HEK293 (cell line): ENCODE measurements at regions of chr18 and their contacts with region 1.

Region 1: GRCh38 chr18:46281185-46282176 is 177.3 kb downstream of the HAUS1 start:
- H3K4me3 ChIP-seq: no peak overlapping the region
- H3K27ac ChIP-seq: no peak overlapping the region
- H3K4me1 ChIP-seq: no peaks in the 10 kb centered on the region; the same call in 1 of the 2 replicates
- CTCF ChIP-seq: peak; percentile 44; the same call in 1 of the 2 replicates

Region 2: DNA sequence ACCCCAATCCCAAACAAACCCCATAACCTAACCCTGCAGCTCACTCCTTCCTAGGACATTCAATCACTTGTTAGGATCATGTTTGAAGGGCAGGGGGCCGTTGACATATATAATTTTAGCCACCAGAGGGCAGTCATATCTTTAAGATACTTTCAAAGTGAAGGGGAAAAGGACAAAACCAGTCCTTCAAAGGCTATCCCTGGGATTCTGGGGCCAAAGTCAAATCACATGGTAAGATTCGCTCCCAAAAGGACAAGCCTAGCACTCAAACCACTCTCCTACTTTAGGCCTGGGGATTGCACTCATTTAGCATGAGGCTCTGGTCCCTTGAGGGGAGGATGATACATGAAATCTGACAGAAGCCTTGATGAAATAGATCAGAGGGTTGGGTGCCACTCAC is 132.7 kb before region 1 on chr18:
- CTCF ChIA-PET with region 1: interaction called, 58 read pairs
- POLR2A ChIA-PET with region 1: interaction called, 4 read pairs
- H3K4me3 ChIP-seq: no peak overlapping the region
- H3K27ac ChIP-seq: no peak overlapping the region
- H3K4me1 ChIP-seq: peaks cover 8% of the 10 kb centered on the region
- CTCF ChIP-seq: 0 out of 2 replicates have a peak, but pooled peaks have one; percentile 45

Region 3: GRCh38 chr18:46297621-46298020 is 16.1 kb after region 1 on chr18:
- CTCF ChIA-PET with region 1: interaction called, 28 read pairs
- POLR2A ChIA-PET with region 1: interaction called, 4 read pairs
- H3K4me3 ChIP-seq: no peak overlapping the region
- H3K27ac ChIP-seq: no peak overlapping the region
- H3K4me1 ChIP-seq: no peaks in the 10 kb centered on the region
- CTCF ChIP-seq: no peak

Region 4: DNA sequence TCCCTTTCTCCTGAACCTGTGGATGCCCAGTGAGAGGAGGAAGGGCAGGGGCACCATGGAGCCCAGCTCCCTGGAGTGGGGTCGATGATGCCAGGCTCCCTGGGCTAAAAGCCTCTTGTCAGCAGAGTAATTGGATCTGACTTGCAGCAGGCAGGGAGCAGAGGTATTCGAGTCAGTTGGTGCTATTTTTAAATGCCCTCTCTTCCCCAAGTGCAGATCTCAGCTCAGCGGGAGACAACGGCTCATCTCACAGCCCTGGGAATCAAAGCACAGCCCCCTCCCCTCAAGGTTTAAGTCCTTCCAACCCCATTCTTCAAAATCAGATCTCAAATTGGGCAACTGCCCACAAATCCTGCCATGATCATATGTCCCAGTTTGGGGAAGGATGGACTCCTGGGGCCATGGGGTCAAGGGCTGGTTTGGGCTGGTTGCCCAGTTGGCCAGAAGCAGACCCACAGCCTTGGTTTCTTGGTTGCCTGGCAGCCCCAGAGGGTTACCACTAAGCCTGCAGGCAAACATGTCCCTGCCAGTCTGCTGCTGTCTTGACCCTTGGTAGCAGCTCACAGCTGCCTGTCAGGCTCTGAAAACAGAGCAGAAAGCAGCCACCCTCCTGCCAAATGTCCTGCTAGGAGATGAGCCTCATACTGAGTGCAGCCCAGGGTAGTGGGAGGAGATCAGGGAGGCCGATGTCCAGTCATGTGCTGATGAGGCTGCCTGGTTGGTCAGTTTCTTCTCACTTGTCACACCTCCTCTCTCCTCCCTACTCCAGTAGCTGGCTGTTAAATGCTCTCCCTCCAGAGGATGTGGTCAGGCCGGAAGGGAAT is 130.6 kb after region 1 on chr18:
- CTCF ChIA-PET with region 1: interaction called, 18 read pairs
- POLR2A ChIA-PET with region 1: no interaction called
- H3K4me3 ChIP-seq: no peak overlapping the region
- H3K27ac ChIP-seq: no peak overlapping the region
- H3K4me1 ChIP-seq: peaks cover 15% of the 10 kb centered on the region
- CTCF ChIP-seq: no peak

Region 5: DNA sequence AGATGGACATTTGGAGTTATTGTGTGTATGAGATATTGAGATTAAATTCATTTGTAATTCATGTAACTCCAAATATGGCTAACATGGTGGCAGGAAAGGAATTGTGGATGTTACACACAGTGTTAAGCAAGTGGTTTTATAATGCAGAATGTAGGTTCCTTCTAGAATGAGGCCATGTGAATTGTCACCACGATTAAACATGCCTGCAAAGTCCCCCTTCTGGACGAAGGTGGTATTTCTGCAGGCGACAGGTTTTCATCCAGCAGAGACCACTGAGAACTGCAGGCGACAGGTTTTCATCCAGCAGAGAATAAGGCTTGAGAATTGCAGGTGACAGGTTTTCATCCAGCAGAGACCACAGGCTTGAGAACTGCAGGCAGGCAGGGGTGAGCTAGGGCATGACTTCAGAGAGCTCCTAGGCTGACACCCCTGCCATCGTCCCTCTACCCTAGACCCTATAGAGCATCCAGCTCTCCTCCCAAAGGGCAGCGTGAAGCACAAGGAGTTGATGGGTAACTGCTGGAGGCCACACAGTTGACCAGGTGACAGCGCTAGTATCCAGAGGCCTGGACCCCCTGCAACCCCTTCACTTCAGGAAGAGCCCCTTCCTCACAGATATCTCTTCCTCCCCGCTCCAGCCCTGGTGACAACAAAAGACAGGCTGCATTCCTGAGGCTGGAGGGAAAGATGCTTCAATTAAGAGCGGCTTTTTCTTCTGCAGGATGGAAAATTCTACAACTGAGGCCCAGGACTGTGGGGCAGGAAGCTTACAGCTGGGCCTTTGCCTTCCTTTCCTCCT is 199.8 kb after region 1 on chr18:
- CTCF ChIA-PET with region 1: interaction called, 77 read pairs
- POLR2A ChIA-PET with region 1: no interaction called
- H3K4me3 ChIP-seq: no peak overlapping the region
- H3K27ac ChIP-seq: no peak overlapping the region
- H3K4me1 ChIP-seq: no peaks in the 10 kb centered on the region; the same call in 1 of the 2 replicates
- CTCF ChIP-seq: no peak; the same call in 1 of the 2 replicates